ENCODE measurements at regions of chr21 and their contacts with region 1.

Region 1: GRCh38 chr21:33127154-33127893 is 57.4 kb downstream of the OLIG1 start:
- DNase-seq: peak; percentile 82
- ATAC-seq: peak; percentile 94
- H3K4me3 Mint-ChIP-seq: peak overlapping the region; percentile 58
- H3K27ac Mint-ChIP-seq: no peak overlapping the region
- H3K4me1 Mint-ChIP-seq: peaks cover 42% of the 10 kb centered on the region
- H3K27me3 Mint-ChIP-seq: peaks cover 16% of the 10 kb centered on the region
- CTCF ChIP-seq: peak; percentile 65

Region 2: GRCh38 chr21:32916522-32917099 is 210.7 kb before region 1 on chr21:
- CTCF ChIA-PET with region 1: interaction called, 11 read pairs
- POLR2A ChIA-PET with region 1: no interaction called
- DNase-seq: no peak
- ATAC-seq: 0 out of 2 replicates have a peak, but pooled peaks have one; percentile 17
- H3K4me3 Mint-ChIP-seq: no peak overlapping the region
- H3K27ac Mint-ChIP-seq: no peak overlapping the region
- H3K4me1 Mint-ChIP-seq: peaks cover 18% of the 10 kb centered on the region
- H3K27me3 Mint-ChIP-seq: no peaks in the 10 kb centered on the region; the same call in 1 of the 2 replicates
- CTCF ChIP-seq: no peak

Region 3: DNA sequence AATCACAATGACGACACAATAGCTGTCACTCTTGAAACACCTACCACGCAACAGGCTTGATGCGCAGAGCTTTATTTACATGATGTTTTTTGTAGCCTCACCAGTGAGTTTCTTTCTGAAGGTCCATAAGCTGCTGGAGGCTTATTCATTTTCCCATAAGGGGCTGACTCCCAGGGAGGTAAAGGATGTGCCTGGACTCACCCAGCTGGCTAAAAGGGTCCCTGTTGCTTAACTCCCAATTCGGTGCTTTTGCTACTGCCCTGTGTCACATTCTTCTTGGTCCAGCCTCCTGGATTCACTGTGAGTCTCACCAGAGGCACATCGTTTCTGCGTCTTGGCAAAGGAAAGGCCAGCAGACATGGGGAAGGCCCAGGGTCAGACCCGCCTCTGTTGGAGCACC is 146.2 kb before region 1 on chr21:
- CTCF ChIA-PET with region 1: no interaction called
- POLR2A ChIA-PET with region 1: no interaction called
- DNase-seq: no peak
- ATAC-seq: no peak
- H3K4me3 Mint-ChIP-seq: no peak overlapping the region
- H3K27ac Mint-ChIP-seq: no peak overlapping the region
- H3K4me1 Mint-ChIP-seq: peaks cover 21% of the 10 kb centered on the region
- H3K27me3 Mint-ChIP-seq: no peaks in the 10 kb centered on the region
- CTCF ChIP-seq: no peak

Region 4: DNA sequence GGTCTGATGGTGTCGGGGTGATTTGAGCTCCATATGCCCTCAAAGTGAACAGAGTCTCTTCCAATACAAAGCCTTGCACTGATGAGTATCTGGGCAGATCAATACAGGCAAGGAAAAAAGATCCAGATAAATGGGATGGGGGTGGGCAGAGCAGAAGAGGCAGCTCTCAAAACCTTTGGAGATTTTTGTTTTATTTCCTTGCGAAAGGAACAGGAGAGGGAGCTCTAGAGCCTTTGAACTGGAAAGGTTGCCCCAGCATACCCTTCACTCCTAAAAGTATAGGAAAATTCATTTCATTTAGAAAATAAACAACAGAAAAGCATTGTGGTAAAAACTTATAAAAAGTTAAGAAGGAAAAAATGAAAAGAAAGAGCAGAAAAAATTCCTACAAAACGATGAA is 133.0 kb before region 1 on chr21:
- CTCF ChIA-PET with region 1: interaction called, 92 read pairs
- POLR2A ChIA-PET with region 1: no interaction called
- DNase-seq: no peak
- ATAC-seq: peak; percentile 56
- H3K4me3 Mint-ChIP-seq: no peak overlapping the region
- H3K27ac Mint-ChIP-seq: no peak overlapping the region
- H3K4me1 Mint-ChIP-seq: peaks cover 8% of the 10 kb centered on the region
- H3K27me3 Mint-ChIP-seq: no peaks in the 10 kb centered on the region; the same call in 1 of the 2 replicates
- CTCF ChIP-seq: no peak

Region 5: GRCh38 chr21:33036430-33037162 is 90.7 kb before region 1 on chr21:
- CTCF ChIA-PET with region 1: interaction called, 28 read pairs
- POLR2A ChIA-PET with region 1: interaction called, 4 read pairs
- DNase-seq: no peak
- ATAC-seq: peak; percentile 13
- H3K4me3 Mint-ChIP-seq: no peak overlapping the region
- H3K27ac Mint-ChIP-seq: no peak overlapping the region
- H3K4me1 Mint-ChIP-seq: peaks cover 41% of the 10 kb centered on the region
- H3K27me3 Mint-ChIP-seq: peaks cover 77% of the 10 kb centered on the region
- CTCF ChIP-seq: no peak

Region 6: GRCh38 chr21:33069976-33070811 is 57.1 kb before region 1 on chr21 and contains the start of gene OLIG1:
- CTCF ChIA-PET with region 1: interaction called, 25 read pairs
- POLR2A ChIA-PET with region 1: no interaction called
- DNase-seq: peak; percentile 82
- ATAC-seq: peak; percentile 79
- H3K4me3 Mint-ChIP-seq: peak within 1 kb of the TSS; percentile 70
- H3K27ac Mint-ChIP-seq: no peak within 1 kb of the TSS
- H3K4me1 Mint-ChIP-seq: peaks cover 42% of the 10 kb centered on the region
- H3K27me3 Mint-ChIP-seq: peaks cover 89% of the 10 kb centered on the region
- CTCF ChIP-seq: no peak
- total RNA-seq, gene OLIG1: 2.1 to 2.4 TPM (median 2.2 TPM) in 3 replicates

Region 7: DNA sequence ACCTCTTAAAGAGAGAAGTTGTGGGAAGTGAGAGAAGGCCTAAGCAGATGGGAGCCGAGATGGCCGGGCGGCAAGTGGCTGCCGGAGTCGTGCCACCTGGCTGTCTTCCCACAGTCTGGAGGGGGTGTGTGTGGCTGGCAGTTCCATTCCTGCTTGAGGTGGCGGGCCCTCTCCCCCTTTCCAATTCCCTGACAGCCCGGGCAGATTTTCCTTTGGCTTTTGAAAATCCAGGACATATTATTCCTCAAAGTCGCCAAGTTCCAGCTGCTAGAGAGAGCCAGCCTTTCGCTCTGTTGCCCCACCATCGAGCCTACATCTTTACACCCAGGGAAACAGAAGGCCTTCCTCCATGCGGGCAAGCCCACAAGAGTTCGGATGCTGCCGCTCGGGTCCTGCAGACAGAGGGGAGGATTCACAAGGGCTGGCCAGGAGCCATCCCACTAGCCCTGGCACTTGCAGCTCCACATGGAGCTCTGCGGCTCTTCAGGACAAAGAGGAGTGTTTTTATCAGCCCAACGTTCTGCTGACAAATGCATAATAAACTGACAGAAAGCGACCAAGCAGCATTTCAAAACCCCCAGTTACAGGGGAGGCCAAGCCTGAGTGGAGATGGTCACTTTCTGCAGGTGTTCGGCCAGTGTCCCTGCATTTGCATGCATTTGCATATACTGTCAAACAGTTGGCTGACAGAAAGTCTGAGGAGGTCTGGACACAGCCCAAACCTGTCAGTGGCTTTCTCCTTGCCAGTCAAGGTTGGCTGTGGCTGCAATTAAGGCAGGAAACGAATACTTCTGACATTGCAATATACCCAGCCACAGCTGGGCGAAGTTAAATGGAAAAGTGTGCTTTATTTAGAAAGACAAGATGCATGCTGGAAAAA is 11.5 kb before region 1 on chr21:
- CTCF ChIA-PET with region 1: interaction called, 17 read pairs
- POLR2A ChIA-PET with region 1: no interaction called
- DNase-seq: no peak
- ATAC-seq: peak; percentile 31
- H3K4me3 Mint-ChIP-seq: no peak overlapping the region
- H3K27ac Mint-ChIP-seq: peak overlapping the region; percentile 21; the same call in 1 of the 2 replicates
- H3K4me1 Mint-ChIP-seq: peaks cover 63% of the 10 kb centered on the region
- H3K27me3 Mint-ChIP-seq: peaks cover 11% of the 10 kb centered on the region
- CTCF ChIP-seq: no peak

Region 8: DNA sequence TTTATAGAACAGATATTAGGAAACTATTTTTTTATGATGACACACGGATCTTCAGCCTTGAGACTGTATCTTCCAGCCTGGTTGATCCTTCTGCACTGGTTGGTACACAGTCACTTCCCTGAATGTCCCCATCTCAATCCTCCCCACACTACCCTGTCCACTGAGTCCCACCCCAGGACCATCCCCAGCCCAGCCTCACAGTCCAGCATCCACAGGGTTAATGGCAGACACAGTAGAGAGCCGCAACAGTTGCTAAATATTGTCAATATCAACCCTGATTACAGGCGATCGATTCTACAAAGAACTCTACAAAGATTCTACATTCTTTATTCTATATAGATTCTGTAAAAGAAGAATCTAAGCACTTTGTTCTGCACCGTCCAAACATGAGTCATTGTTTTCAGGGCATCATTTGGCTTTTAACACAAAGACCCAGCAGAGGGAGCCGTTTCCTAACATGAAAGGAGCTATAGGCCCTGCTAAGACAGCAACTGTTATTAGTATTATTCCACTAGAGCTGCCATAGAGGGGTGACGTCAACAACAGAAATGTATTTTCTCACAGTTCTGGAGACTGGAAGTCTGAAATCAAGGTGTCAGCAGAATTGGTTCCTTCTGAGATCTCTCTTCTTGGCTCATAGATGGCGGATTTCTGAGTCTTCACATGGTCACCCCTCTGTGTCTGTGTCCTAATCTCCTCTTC is 72.3 kb after region 1 on chr21:
- CTCF ChIA-PET with region 1: interaction called, 25 read pairs
- POLR2A ChIA-PET with region 1: no interaction called
- DNase-seq: peak; percentile 56
- ATAC-seq: peak; percentile 82
- H3K4me3 Mint-ChIP-seq: no peak overlapping the region
- H3K27ac Mint-ChIP-seq: no peak overlapping the region
- H3K4me1 Mint-ChIP-seq: peaks cover 16% of the 10 kb centered on the region
- H3K27me3 Mint-ChIP-seq: peaks cover 4% of the 10 kb centered on the region; the same call in 1 of the 2 replicates
- CTCF ChIP-seq: peak; percentile 34; the same call in 1 of the 2 replicates